GM10248 (cell line): ENCODE measurements at regions of chr5 and their contacts with region 1.

Region 1: DNA sequence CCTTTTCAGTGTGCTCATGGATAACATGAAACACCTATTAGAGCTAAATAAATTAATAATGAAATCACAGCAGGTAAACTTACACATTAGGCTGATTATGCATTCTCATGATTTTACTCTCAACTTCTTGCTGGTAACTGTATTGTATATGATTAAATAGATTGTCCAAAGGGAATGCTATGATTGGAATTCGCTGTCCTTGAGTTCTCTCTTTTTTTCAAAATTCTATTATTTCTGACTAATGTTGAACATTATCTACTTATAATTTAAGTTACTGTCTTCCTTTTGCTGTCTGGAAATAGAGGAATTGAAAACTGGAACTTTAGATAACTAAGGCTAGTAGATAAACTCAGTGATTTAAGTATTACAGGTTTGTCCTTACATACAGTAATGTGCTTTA is 13.1 kb downstream of the CENPH start:
- DNase-seq: no peak
- CTCF ChIP-seq: no peak

Region 2: GRCh38 chr5:69189162-69190086 is 13.1 kb before region 1 on chr5 and contains the start of gene CENPH:
- CTCF ChIA-PET with region 1: interaction called, 13 read pairs
- POLR2A ChIA-PET with region 1: no interaction called
- DNase-seq: peak; percentile 94
- CTCF ChIP-seq: no peak